ENCODE measurements at regions of chr1 and their contacts with region 1.

Region 1: GRCh38 chr1:37486680-37487618 is 12.6 kb downstream of the ZC3H12A start:
- DNase-seq: peak; percentile 74
- H3K4me3 ChIP-seq: no peak overlapping the region
- H3K27ac ChIP-seq: no peak overlapping the region
- H3K4me1 ChIP-seq: peaks cover 2% of the 10 kb centered on the region
- H3K27me3 ChIP-seq: no peaks in the 10 kb centered on the region
- CTCF ChIP-seq: peak; percentile 97
- POLR2A ChIP-seq: no peak

Region 2: DNA sequence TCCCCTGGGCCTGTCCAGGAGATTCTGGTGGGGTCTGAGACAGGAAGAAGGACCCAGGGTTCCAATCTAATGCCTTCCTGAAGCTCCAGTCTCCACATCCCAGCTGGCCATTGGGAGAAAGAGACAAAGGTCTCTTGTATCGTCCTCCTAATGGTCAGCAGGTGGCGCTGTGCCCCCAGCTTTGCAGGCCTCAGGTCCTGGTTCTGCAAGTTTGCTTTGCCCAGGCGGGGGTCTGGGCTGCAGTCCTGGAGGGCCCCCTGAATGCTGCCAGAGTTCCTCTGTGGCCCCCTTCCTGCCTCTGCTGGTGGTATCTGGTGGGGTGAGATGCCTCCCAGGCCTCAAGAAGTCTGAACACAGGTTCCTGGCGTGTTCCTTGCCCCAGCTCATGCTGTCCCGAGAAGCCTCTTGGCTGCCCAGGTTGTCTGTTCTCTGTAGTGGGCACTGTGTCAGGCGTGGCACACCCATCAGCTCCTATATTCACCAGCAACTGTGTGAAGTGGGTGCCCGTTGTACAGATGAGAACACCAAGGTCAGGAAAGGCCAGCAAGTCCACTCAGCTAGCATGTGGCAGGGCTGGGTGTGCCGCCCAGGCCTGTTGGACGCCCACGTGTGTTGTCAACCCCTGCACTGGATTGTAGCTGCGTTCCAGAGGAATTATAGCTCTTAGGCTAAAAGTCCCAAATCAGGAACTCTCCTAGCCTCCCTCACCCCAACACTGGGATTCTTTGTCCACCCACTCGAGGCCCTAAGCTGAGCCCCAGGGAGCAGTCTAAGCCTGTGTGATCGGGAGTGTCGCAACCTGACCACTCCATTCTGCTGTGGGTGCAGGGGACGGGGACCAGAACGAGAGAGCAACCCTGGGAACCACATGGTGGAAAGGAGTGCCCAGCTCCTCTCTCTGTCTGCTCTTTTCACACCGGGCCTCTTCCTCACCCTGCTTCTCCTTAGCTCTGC is 970.3 kb before region 1 on chr1:
- CTCF ChIA-PET with region 1: interaction called, 11 read pairs
- POLR2A ChIA-PET with region 1: no interaction called
- dilution Hi-C with region 1: no loop called
- intact Hi-C with region 1: no loop called
- DNase-seq: peak; percentile 43
- H3K4me3 ChIP-seq: no peak overlapping the region
- H3K27ac ChIP-seq: no peak overlapping the region
- H3K4me1 ChIP-seq: no peaks in the 10 kb centered on the region
- H3K27me3 ChIP-seq: peaks cover 0 to 1% of the 10 kb centered on the region in 2 experiments
- CTCF ChIP-seq: peak; percentile 85 to 90
- POLR2A ChIP-seq: no peak

Region 3: GRCh38 chr1:37458528-37458927 is 28.4 kb before region 1 on chr1:
- CTCF ChIA-PET with region 1: interaction called, 337 read pairs
- POLR2A ChIA-PET with region 1: interaction called, 6 read pairs
- dilution Hi-C with region 1: no loop called
- intact Hi-C with region 1: loop called (anchors 1 kb)
- DNase-seq: no peak
- H3K4me3 ChIP-seq: no peak overlapping the region
- H3K27ac ChIP-seq: no peak overlapping the region
- H3K4me1 ChIP-seq: peaks cover 4% of the 10 kb centered on the region
- H3K27me3 ChIP-seq: no peaks in the 10 kb centered on the region
- CTCF ChIP-seq: no peak
- POLR2A ChIP-seq: no peak

Region 4: DNA sequence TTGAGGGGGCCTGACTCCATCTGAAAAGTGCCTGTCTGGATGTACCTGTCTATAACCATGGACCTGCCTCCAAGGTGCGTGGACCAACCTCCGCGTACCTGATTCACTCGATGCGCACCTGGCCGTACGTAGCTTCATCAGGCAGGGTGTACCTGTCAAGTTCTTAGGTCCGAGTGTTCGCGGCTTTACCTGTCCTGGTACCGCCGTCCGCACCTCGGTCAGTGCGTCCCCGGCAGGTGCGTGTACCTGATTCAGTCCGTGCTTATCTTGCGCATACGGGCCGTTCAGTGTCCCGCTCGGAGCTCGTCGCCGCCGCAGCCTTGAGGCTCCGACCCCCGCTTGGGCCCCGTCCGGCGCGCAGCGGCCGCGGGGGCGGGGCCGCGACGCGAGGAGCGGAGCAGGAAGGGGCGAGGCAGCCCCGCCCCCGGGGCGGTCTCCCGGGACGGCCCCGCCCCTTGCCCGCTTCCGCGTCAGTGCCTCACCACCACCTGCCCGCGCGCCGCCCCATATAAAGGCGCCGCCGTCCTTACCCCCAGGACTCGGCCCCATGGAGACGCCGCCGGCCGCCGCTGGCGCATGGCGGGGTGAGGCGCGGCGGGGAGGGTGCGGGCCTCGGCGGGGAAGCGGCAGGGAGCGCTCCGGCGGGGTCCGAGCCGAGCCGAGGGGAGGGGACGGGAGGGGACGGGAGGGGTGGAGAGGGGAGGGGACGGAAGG is 12.7 kb before region 1 on chr1 and contains the start of gene ZC3H12A:
- CTCF ChIA-PET with region 1: interaction called, 158 read pairs
- POLR2A ChIA-PET with region 1: interaction called, 27 read pairs
- dilution Hi-C with region 1: no loop called
- intact Hi-C with region 1: loop called (anchors 1 kb)
- DNase-seq: peak; percentile 84
- H3K4me3 ChIP-seq: peak within 1 kb of the TSS; percentile 47 to 69 (median 55)
- H3K27ac ChIP-seq: peak within 1 kb of the TSS; percentile 65
- H3K4me1 ChIP-seq: peaks cover 72% of the 10 kb centered on the region
- H3K27me3 ChIP-seq: no peaks in the 10 kb centered on the region
- CTCF ChIP-seq: no peak
- POLR2A ChIP-seq: peak; percentile 97
- total RNA-seq, gene ZC3H12A: 6.3 and 7.5 TPM in 2 replicates

Region 5: GRCh38 chr1:37509181-37509580 is 22.2 kb after region 1 on chr1:
- CTCF ChIA-PET with region 1: interaction called, 26 read pairs
- POLR2A ChIA-PET with region 1: no interaction called
- dilution Hi-C with region 1: no loop called
- intact Hi-C with region 1: no loop called
- DNase-seq: no peak
- H3K4me3 ChIP-seq: no peak overlapping the region
- H3K27ac ChIP-seq: no peak overlapping the region
- H3K4me1 ChIP-seq: peaks cover 9% of the 10 kb centered on the region
- H3K27me3 ChIP-seq: no peaks in the 10 kb centered on the region
- CTCF ChIP-seq: no peak
- POLR2A ChIP-seq: no peak

Region 6: GRCh38 chr1:37567023-37567422 is 80.1 kb after region 1 on chr1:
- CTCF ChIA-PET with region 1: no interaction called
- POLR2A ChIA-PET with region 1: no interaction called
- dilution Hi-C with region 1: no loop called
- intact Hi-C with region 1: no loop called
- DNase-seq: no peak
- H3K4me3 ChIP-seq: no peak overlapping the region
- H3K27ac ChIP-seq: no peak overlapping the region
- H3K4me1 ChIP-seq: peaks cover 5% of the 10 kb centered on the region
- H3K27me3 ChIP-seq: no peaks in the 10 kb centered on the region
- CTCF ChIP-seq: no peak
- POLR2A ChIP-seq: no peak